ENCODE measurements at regions of chr15 and their contacts with region 1.

Region 1: DNA sequence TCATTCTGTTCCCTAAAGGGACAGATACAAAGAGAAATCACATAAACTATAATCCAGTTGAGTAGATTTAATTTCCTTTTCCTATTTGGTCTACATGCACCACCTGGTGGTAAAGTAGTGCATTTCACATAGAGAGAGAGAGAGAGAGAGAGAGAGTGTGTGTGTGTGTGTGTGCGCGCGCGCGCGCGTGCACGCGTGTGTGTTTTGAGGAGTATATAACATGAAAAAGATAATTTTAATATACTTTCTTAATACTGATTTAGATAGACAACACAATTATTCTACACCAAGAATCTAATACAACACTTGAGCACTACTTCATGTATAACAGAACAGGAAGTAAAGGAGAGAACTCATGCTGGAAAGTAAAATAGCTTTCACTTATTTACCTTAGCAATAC is 1.1 kb upstream of the FGF7 start:
- DNase-seq: no peak
- H3K4me3 ChIP-seq: no peak overlapping the region
- CTCF ChIP-seq: peak; percentile 45

Region 2: DNA sequence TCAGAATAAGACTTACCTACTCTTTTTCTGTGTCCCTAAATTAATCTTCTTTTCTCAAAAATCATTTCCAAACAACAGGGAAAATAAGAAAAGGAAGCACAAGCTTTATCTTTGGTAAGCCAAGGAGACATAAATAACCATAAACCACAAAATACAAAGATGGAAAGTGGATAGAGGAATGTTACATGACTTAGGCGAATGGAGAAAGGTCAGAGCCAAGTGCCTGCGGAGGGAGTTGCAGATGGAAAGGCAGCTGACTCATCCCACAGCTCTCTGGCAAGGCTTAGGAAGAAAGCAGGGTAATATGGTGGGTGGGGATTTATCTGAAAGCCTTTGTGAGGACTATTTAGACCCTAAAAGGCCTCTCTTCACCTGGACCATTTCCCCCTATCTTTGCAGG is 179.2 kb before region 1 on chr15:
- CTCF ChIA-PET with region 1: interaction called, 184 read pairs
- POLR2A ChIA-PET with region 1: interaction called, 3 read pairs
- DNase-seq: no peak
- H3K4me3 ChIP-seq: no peak overlapping the region
- CTCF ChIP-seq: no peak

Region 3: DNA sequence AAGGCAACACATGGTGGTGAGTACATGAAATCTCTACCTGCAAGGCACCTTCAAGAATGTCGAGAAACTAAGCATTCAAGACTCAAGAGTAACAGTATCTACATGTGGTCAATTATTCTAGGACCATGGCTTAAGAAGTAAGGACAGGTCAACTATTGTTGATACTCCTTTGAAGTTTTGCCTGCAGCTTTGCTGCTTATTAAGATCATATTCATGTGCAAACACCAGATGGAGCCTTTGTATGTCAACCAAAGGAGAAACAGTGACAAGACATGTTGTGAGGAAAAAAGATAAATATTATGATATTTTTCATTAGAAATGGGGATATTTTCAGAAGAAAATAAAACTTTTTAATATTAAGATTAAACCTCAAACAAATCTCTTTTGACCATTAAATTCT is 51.2 kb before region 1 on chr15:
- CTCF ChIA-PET with region 1: interaction called, 12 read pairs
- POLR2A ChIA-PET with region 1: no interaction called
- DNase-seq: no peak
- H3K4me3 ChIP-seq: no peak overlapping the region
- CTCF ChIP-seq: peak; percentile 18

Region 4: DNA sequence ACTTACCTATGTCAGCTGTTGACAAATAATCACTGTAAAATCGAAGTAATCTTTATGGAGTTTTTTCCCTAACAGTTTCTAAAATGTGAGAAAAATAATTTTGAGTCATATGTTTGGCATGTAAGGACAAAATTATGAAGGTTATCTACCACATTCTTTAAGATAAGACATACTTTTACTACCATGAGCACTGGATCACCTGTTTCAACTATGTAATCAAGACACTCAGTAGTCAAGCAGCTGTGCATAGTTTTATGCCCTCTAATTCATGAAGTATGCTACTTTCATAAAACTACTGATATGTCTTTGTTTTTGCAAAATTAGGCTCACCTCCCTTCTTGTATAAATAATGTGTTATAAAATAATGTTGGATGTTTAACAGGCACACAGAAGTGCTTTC is 13.2 kb after region 1 on chr15:
- CTCF ChIA-PET with region 1: interaction called, 18 read pairs
- POLR2A ChIA-PET with region 1: no interaction called
- DNase-seq: no peak
- H3K4me3 ChIP-seq: no peak overlapping the region
- CTCF ChIP-seq: no peak

Region 5: DNA sequence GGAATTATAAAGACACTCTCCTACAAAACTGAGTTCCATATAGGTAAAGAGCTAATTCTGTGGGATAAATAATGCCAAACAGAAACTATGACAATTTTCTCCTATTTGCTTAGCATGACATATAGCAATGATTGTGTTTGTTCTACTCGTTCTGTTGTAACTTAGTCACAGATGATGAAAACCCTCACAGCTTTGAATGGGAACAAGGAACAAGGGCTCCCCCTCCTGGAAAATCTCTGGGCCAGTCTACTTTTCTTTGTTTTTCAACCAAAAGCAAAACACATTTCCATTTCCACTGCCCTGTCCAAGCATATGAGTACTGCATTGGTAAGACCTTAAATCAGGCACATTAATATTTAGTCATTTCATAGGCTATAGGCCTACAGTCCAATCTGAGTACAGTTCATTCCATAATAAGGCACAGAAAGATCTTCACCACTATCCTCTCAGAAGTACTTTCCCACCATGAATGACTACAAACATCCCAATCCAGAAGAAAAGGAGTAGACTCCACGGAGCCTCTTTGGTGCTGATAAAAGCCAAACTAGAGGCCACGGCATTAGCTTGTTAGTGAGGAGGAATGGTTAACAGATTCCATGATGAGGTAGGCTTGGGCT is 629.9 kb after region 1 on chr15:
- CTCF ChIA-PET with region 1: interaction called, 16 read pairs
- POLR2A ChIA-PET with region 1: no interaction called
- DNase-seq: peak; percentile 52
- H3K4me3 ChIP-seq: no peak overlapping the region
- CTCF ChIP-seq: peak; percentile 69